ENCODE measurements at regions of chr6 and their contacts with region 1.

Region 1: DNA sequence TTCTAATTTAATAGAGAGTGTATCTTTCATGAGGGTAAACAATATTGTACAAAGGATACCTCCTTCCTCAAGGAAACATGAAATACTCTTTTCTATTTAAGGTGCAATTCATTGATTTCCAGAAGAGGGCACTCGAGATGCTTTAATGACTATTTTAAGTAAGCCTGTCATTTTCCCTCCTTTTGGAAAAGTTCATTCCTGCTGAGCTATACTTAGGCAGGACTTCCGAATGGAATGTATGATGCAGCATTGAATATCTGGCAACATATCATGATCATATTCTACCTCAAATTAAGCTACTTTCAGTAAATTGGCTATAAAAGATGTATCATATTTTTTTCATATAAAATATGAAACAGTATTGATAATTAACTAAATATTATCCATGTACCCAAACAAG is 5.0 kb downstream of the DST start:
- DNase-seq: peak in 1 of 2 experiments; percentile 78
- H3K4me3 ChIP-seq: no peak overlapping the region
- H3K4me1 ChIP-seq: 0 out of 2 replicates have a peak, but pooled peaks cover 1% of the 10 kb centered on the region
- H3K27me3 ChIP-seq: no peaks in the 10 kb centered on the region

Region 2: GRCh38 chr6:56699066-56699654 is 61.5 kb after region 1 on chr6:
- in situ Hi-C with region 1: loop called (anchors 5 kb)
- DNase-seq: no peak
- H3K4me3 ChIP-seq: no peak overlapping the region
- H3K4me1 ChIP-seq: no peaks in the 10 kb centered on the region
- H3K27me3 ChIP-seq: no peaks in the 10 kb centered on the region

Region 3: DNA sequence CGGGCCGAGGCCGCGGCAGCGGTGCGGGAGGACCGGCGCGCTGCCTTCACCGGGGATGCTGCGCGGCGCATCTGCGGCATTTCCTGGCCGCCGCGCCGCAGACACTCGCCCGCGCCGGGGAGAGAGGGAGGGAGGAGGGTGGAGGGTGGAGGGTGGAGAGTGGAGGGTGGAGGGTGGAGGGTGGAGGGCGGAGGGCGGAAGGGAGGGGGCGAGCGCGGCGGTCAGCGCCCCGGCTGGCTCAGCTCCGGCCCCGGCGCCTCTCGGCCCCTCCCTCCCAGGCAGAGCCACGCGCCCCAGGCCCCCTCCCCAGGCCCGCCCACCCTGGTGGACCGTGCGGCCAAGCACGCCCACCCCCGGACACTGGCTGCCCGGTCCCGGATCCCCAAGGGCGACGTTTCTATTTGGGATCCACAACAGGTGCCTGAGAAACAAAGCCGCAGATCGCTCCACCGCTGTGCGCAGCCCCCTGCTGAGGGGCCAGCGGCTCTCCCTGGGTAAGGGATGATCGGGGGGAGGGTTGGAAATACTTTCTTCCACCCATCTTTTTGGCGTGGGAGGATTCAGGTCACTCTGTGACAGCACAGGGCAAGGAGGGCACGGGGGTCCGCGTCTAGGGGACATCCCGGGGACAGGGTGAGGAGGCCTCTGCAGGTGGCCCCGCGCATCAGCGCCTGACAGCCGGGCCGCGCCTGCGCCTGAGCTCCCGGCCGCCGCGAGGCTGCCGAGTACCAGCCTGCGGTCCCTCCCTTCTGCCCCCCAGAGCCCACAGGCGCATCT is 206.1 kb after region 1 on chr6:
- in situ Hi-C with region 1: loop called (anchors 10 kb)
- DNase-seq: peak; percentile 86 to 87
- H3K4me3 ChIP-seq: peak overlapping the region; percentile 47
- H3K4me1 ChIP-seq: peaks cover 31% of the 10 kb centered on the region
- H3K27me3 ChIP-seq: no peaks in the 10 kb centered on the region

Region 4: DNA sequence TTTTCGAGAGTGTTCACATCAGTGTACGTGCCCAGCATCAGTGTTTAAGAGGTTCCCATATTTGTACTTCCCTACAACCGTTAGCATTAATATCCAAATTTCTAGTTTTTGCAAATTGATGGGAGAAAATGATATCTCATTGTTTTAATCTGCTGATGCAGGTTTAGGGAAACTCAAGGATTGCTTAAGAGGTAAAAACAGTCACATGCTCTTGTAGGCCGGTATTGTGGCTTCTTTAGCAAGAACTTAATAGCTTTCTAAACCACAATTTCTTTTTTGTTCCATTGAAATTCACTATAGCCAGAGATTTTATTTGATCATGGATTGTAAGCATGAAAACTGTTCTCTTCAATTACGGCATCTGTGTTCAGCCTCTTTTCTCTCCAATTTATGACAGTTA is 346.7 kb after region 1 on chr6:
- in situ Hi-C with region 1: no loop called
- DNase-seq: peak in 1 of 2 experiments; percentile 51
- H3K4me3 ChIP-seq: no peak overlapping the region
- H3K4me1 ChIP-seq: peaks cover 7% of the 10 kb centered on the region
- H3K27me3 ChIP-seq: no peaks in the 10 kb centered on the region

Measured in HAP-1 (cell line).